Activated T-helper 2 cell treated with anti-CD3 and anti-CD28 coated beads, Interferon-gamma antibody, Interleukin-2, Interleukin-4, amounts not matched to agents 10 μg/mL and 5 μg/mL and 100 μg/mL, durations not matched to agents 14 hours and 24 hours and 36 hours (primary cell): ENCODE measurements at regions of chr2 and their contacts with region 1.

Region 1: GRCh38 chr2:165203689-165204559 is at the start of gene SCN3A:
- DNase-seq: no peak
- H3K4me3 Mint-ChIP-seq: no peak within 1 kb of the TSS
- H3K27ac Mint-ChIP-seq: no peak within 1 kb of the TSS
- H3K4me1 Mint-ChIP-seq: no peaks in the 10 kb centered on the region
- H3K27me3 Mint-ChIP-seq: peaks cover 1% of the 10 kb centered on the region
- total RNA-seq, gene SCN3A: 0.05 TPM in 1 of 2 replicates, not detected in the other

Region 2: GRCh38 chr2:165015052-165015642 is 188.8 kb before region 1 on chr2:
- intact Hi-C with region 1: loop called (anchors 1 kb)
- DNase-seq: peak; percentile 33
- H3K4me3 Mint-ChIP-seq: no peak overlapping the region
- H3K27ac Mint-ChIP-seq: no peak overlapping the region
- H3K4me1 Mint-ChIP-seq: no peaks in the 10 kb centered on the region
- H3K27me3 Mint-ChIP-seq: peaks cover 2% of the 10 kb centered on the region

Region 3: GRCh38 chr2:165305391-165306096 is 101.6 kb after region 1 on chr2:
- intact Hi-C with region 1: no loop called
- DNase-seq: no peak
- H3K4me3 Mint-ChIP-seq: no peak overlapping the region
- H3K27ac Mint-ChIP-seq: no peak overlapping the region
- H3K4me1 Mint-ChIP-seq: no peaks in the 10 kb centered on the region
- H3K27me3 Mint-ChIP-seq: peaks cover 10% of the 10 kb centered on the region